HEK293 (cell line): ENCODE measurements at regions of chr10 and their contacts with region 1.

Region 1: DNA sequence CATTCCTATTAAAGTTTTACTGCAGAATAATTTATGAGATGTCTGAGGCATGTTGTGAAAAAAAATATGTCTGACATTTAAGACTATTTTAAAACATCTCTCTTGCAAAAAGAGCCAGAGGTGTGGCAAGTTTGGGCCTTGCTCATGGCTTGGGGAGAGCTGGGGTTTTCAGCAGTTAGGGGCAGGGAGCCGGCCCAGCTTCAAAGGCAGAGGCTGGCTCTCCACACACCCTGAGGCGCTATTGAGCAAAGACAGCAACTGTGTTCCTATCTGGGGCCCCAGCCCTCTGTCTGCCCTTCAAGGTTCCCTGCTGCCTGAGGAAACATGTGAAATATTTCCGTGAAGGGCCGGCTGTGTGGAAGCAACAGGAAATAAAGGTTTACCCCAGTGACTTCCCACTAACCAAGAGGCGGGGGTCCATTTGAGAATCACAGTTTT is 94.0 kb downstream of the SORBS1 start:
- H3K4me3 ChIP-seq: no peak overlapping the region
- H3K27ac ChIP-seq: peak overlapping the region; percentile 28; the same call in 1 of the 2 replicates
- H3K4me1 ChIP-seq: peaks cover 12% of the 10 kb centered on the region
- CTCF ChIP-seq: peak; percentile 39; the same call in 1 of the 2 replicates

Region 2: GRCh38 chr10:95451568-95452524 is 15.3 kb before region 1 on chr10:
- CTCF ChIA-PET with region 1: interaction called, 3 read pairs
- POLR2A ChIA-PET with region 1: interaction called, 10 read pairs
- H3K4me3 ChIP-seq: no peak overlapping the region
- H3K27ac ChIP-seq: no peak overlapping the region
- H3K4me1 ChIP-seq: no peaks in the 10 kb centered on the region
- CTCF ChIP-seq: no peak

Region 3: DNA sequence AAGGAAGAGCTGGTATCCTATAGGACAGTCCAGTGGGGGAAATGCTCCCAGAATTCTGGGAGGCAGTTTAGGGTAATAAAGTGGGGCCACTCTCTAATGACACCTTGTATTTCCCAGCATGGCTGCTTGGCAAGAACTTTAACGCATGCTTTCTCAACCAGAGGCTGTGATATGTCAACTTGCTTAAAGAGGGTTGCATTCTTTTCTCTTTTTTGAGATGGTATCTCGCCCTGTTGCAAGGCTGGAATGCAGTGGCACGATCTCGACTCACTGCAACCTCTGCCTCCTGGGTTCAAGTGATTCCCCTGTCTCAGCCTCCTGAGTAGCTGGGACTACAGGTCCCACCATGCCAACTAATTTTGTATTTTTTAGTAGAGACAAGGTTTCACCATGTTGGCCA is 150.9 kb after region 1 on chr10:
- CTCF ChIA-PET with region 1: no interaction called
- POLR2A ChIA-PET with region 1: no interaction called
- H3K4me3 ChIP-seq: no peak overlapping the region
- H3K27ac ChIP-seq: no peak overlapping the region
- H3K4me1 ChIP-seq: no peaks in the 10 kb centered on the region
- CTCF ChIP-seq: no peak

Region 4: DNA sequence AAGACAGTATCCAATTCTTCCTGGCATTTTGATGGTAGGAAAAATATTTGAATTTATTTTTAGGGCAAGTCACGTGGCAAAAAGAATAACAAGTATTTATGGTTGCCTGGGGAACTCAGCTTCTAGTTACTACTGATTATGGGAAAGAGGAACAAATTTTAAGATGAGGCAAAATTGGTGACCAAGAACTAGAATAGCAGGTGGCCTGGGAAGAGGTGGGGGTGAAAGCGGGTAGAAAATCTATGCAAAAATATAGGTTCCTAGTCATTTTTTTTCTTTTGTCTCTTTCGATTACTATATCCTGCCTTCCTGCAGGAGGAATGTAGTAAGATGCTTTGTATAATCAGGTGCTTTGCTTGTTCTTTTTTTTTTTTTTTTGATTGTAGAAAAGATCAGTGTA is 316.6 kb after region 1 on chr10:
- CTCF ChIA-PET with region 1: no interaction called
- POLR2A ChIA-PET with region 1: no interaction called
- H3K4me3 ChIP-seq: no peak overlapping the region
- H3K27ac ChIP-seq: no peak overlapping the region
- H3K4me1 ChIP-seq: no peaks in the 10 kb centered on the region
- CTCF ChIP-seq: no peak